ENCODE measurements at regions of chr11 and their contacts with region 1.

Region 1: GRCh38 chr11:70073871-70074371 is 4.2 kb upstream of the ANO1 start:
- DNase-seq: no peak
- H3K4me3 ChIP-seq: no peak overlapping the region
- H3K27ac ChIP-seq: no peak overlapping the region
- H3K4me1 ChIP-seq: no peaks in the 10 kb centered on the region
- H3K27me3 ChIP-seq: no peaks in the 10 kb centered on the region
- CTCF ChIP-seq: no peak
- POLR2A ChIP-seq: no peak

Region 2: DNA sequence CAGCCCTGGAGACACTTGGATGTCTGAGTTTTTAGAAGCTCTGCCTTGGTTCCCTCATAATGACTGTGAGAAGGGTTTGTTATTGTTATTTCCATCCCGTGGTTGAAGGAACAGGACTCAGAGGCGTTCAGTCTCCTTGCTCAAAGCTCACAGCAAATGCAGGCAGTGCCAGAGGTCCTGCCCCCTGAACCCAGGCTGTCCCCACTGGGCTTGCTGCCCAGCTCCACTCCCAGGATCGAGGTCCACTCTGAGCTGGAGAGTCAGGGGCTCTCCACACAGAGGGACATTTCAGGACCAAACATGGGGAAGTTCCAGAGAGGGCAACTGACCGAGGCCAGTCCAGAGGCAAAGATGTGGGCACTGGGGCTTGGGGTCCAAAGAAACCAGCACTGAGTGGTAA is 313.6 kb before region 1 on chr11:
- intact Hi-C with region 1: no loop called
- DNase-seq: no peak
- H3K4me3 ChIP-seq: no peak overlapping the region
- H3K27ac ChIP-seq: no peak overlapping the region
- H3K4me1 ChIP-seq: no peaks in the 10 kb centered on the region
- H3K27me3 ChIP-seq: no peaks in the 10 kb centered on the region
- CTCF ChIP-seq: no peak
- POLR2A ChIP-seq: no peak

Region 3: DNA sequence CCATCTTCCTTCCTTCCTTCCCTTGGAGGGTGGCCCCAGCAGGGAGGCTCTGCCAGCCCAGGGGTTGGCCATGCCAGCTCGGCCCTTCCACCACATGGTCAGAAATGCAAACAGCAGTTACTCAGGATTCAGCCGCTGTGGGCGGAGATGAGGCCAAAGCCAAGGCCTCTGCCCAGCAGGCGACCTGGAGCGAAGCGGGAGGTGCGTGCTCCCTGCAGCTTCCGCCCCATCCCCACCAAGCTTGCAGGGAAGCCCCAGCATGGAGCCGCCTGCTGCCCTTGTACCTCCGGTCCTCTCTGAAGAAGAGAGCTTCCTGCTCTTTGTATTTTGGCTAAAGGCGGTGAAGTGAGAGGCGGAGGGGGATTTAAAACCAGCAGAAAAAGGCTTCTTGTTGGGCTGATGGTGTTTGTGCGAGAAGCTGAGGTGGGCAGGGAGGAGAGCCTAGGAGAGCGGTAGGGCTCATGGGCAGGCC is 54.5 kb after region 1 on chr11:
- intact Hi-C with region 1: no loop called
- DNase-seq: no peak
- H3K4me3 ChIP-seq: no peak overlapping the region
- H3K27ac ChIP-seq: peak overlapping the region; percentile 43 to 45
- H3K4me1 ChIP-seq: no peaks in the 10 kb centered on the region
- H3K27me3 ChIP-seq: no peaks in the 10 kb centered on the region
- CTCF ChIP-seq: no peak
- POLR2A ChIP-seq: no peak

Region 4: DNA sequence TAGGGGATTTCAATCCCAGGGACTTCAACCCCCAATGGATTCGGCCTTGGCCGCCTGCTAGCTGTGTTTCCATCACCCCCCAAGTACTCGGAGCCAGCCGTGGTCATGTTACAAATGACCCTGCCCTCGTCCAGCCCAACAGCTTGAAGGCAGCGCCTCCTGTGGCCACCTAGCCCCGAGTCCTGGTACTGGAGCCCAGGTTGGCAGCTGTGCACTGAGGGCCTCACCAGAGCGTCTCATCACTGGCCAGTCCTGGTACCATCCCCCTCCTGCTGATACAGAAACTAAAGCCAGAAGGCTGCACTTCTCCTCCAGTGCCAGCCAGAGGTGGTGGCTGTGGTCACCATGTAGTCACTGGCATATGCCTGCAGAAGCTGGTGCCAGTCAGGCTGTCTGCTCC is 84.3 kb after region 1 on chr11:
- intact Hi-C with region 1: loop called (anchors 10 kb)
- DNase-seq: peak in 1 of 2 donors; percentile 28
- H3K4me3 ChIP-seq: no peak overlapping the region
- H3K27ac ChIP-seq: no peak overlapping the region
- H3K4me1 ChIP-seq: no peaks in the 10 kb centered on the region
- H3K27me3 ChIP-seq: no peaks in the 10 kb centered on the region
- CTCF ChIP-seq: peak in 1 of 4 experiments; percentile 16
- POLR2A ChIP-seq: no peak